HEK293 (cell line): ENCODE measurements at regions of chr7 and their contacts with region 1.

Region 1: GRCh38 chr7:106542550-106543220 is 118.3 kb downstream of the CCDC71L start:
- H3K4me3 ChIP-seq: no peak overlapping the region
- H3K27ac ChIP-seq: no peak overlapping the region
- H3K4me1 ChIP-seq: no peaks in the 10 kb centered on the region
- CTCF ChIP-seq: peak; percentile 76

Region 2: GRCh38 chr7:106552645-106553445 is 10.2 kb after region 1 on chr7:
- CTCF ChIA-PET with region 1: interaction called, 11 read pairs
- POLR2A ChIA-PET with region 1: no interaction called
- H3K4me3 ChIP-seq: no peak overlapping the region
- H3K27ac ChIP-seq: no peak overlapping the region
- H3K4me1 ChIP-seq: no peaks in the 10 kb centered on the region
- CTCF ChIP-seq: no peak

Region 3: GRCh38 chr7:106635411-106635810 is 92.7 kb after region 1 on chr7:
- CTCF ChIA-PET with region 1: interaction called, 11 read pairs
- POLR2A ChIA-PET with region 1: no interaction called
- H3K4me3 ChIP-seq: no peak overlapping the region
- H3K27ac ChIP-seq: no peak overlapping the region
- H3K4me1 ChIP-seq: no peaks in the 10 kb centered on the region
- CTCF ChIP-seq: no peak

Region 4: GRCh38 chr7:106659963-106660861 is 117.5 kb after region 1 on chr7:
- CTCF ChIA-PET with region 1: interaction called, 26 read pairs
- POLR2A ChIA-PET with region 1: interaction called, 10 read pairs
- H3K4me3 ChIP-seq: peak overlapping the region; percentile 94
- H3K27ac ChIP-seq: peak overlapping the region; percentile 86
- H3K4me1 ChIP-seq: no peaks in the 10 kb centered on the region
- CTCF ChIP-seq: peak; percentile 92

Region 5: GRCh38 chr7:106736508-106737201 is 194.0 kb after region 1 on chr7:
- CTCF ChIA-PET with region 1: interaction called, 20 read pairs
- POLR2A ChIA-PET with region 1: no interaction called
- H3K4me3 ChIP-seq: no peak overlapping the region
- H3K27ac ChIP-seq: no peak overlapping the region
- H3K4me1 ChIP-seq: no peaks in the 10 kb centered on the region
- CTCF ChIP-seq: peak; percentile 27; the same call in 1 of the 2 replicates